ENCODE measurements at regions of chr5 and their contacts with region 1.

Region 1: DNA sequence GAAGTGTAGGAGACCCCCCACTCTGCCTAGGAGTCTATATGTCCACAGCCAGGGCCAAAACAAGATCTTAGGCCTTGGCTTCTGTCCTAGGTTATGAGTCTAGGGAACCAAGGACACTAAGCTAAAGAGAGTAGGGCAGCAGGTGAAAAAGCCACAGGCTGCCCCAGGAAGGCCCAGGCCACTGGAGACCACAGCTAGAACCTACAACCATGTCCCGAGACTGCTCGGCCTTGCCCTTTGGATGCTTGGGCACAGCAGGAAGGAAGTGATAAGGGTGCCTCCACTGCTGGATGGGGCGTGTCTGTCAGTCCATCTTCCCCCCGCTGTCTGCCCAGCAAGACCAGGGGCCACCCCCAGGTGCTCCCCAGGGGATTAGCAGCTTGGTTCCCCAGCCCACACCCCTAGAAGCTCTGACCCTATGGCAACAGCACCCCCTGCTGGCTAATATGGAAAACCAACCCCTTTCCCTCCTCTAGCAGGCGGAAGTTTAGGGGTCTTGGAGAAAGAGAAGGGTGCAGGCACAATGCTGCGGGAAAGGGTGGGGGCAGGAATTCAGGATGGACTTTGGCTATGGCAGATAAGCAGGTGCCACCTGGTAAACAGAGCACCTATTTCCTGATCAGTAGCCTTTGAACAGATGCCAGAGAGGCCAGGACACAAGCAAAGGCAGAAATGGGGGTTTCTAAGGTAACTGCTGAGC is 10.5 kb upstream of the IRF1 start:
- DNase-seq: no peak

Region 2: GRCh38 chr5:132215329-132215728 is 285.8 kb before region 1 on chr5:
- intact Hi-C with region 1: no loop called
- DNase-seq: peak; percentile 93

Region 3: GRCh38 chr5:132272311-132273210 is 228.5 kb before region 1 on chr5:
- intact Hi-C with region 1: loop called (anchors 5 kb)
- DNase-seq: no peak

Region 4: GRCh38 chr5:132556763-132557477 is 55.8 kb after region 1 on chr5 and contains the start of gene RAD50:
- intact Hi-C with region 1: loop called (anchors 2 kb)
- DNase-seq: peak; percentile 93
- total RNA-seq, gene RAD50: 27.7 TPM

Region 5: DNA sequence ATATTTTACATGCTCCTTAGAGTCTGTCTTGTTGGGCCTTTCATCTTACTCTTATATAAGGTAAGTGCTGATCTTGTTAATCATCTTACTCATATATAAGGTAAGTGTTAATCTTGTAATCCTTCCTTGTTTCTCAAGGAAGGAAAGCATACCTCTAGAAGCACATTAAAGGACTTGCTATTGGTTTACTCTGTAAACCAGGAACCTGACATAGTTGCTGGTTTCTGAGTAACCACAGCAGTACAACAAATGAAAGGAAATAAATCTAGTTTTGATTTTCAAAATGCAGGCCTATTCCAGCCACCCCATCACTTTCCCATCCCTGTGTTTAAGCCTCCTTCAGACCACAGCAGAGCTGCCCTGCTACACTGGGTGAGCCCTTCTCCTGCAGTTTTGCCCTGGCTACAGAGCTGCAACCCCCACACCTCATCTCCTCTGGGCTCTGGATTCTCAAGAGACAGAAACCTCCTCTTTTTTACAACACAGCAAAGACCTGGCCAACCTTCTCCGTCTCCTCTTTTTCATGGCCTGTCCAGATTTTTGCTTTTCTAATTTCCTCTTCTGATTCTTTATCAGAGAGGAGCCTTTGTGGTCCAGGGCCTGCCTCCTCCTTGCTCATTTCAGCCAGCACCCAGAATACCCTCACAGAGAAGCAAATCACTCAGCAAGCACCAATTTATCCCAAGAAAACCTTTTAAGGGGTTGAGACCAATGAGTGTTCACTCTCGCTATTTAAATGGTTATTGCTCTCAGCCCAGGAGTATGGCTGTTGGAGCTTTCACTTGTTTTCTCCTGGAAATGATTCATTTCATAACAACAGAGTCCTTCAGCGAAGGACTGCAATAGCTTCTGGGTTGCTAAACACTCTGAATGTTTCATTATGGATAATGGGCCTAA is 1008.0 kb after region 1 on chr5:
- intact Hi-C with region 1: no loop called
- DNase-seq: no peak

Measured in cardiac septum (tissue), 1 donor.